ENCODE measurements at regions of chr16 and their contacts with region 1.

Region 1: DNA sequence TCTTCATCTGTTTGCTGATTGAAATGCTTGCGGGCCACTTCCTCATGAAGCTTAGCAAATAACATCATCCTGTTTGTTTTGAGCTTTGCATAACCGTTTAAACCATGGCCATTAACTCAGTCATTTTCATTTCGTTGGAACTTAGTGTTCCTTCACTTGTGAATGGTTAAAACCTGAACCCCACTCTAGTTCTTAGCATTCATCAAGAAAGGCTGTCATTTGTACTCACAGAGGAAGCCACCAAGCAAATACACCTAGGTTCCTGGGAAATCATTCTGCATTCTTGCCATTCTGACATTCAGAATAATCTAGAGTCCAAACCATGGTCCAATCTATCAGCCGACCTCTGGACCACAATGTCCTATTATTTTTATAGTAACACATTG is 8.4 kb upstream of the TAT start:
- DNase-seq: no peak
- ATAC-seq: no peak
- H3K4me3 ChIP-seq: no peak overlapping the region
- H3K27ac ChIP-seq: no peak overlapping the region
- H3K4me1 ChIP-seq: no peaks in the 10 kb centered on the region
- H3K27me3 ChIP-seq: peaks cover 35 to 45% of the 10 kb centered on the region in 2 experiments
- CTCF ChIP-seq: no peak
- EP300 ChIP-seq: no peak
- POLR2A ChIP-seq: no peak
- RAD21 ChIP-seq: no peak

Region 2: GRCh38 chr16:71426072-71426879 is 159.0 kb before region 1 on chr16:
- CTCF ChIA-PET with region 1: no interaction called
- POLR2A ChIA-PET with region 1: no interaction called
- in situ Hi-C with region 1: loop called (anchors 10 kb)
- intact Hi-C with region 1: no loop called
- DNase-seq: peak; percentile 59 to 70 (median 68)
- ATAC-seq: peak; percentile 83
- H3K4me3 ChIP-seq: peak overlapping the region; percentile 11; the same call in 1 of the 2 replicates
- H3K27ac ChIP-seq: no peak overlapping the region
- H3K4me1 ChIP-seq: peaks cover 15 to 19% of the 10 kb centered on the region in 2 experiments; a peak in 4 of 5 replicates
- H3K27me3 ChIP-seq: peaks cover 15 to 53% of the 10 kb centered on the region in 2 experiments; a peak in 4 of 5 replicates
- CTCF ChIP-seq: no peak
- EP300 ChIP-seq: no peak
- POLR2A ChIP-seq: no peak
- RAD21 ChIP-seq: no peak

Region 3: GRCh38 chr16:71461686-71462648 is 123.3 kb before region 1 on chr16 and contains the start of gene ZNF23:
- CTCF ChIA-PET with region 1: no interaction called
- POLR2A ChIA-PET with region 1: no interaction called
- in situ Hi-C with region 1: no loop called
- intact Hi-C with region 1: no loop called
- DNase-seq: peak; percentile 87 to 96 (median 94)
- ATAC-seq: peak; percentile 99
- H3K4me3 ChIP-seq: peak within 1 kb of the TSS; percentile 85
- H3K27ac ChIP-seq: peak within 1 kb of the TSS; percentile 64
- H3K4me1 ChIP-seq: peaks cover 4 to 6% of the 10 kb centered on the region in 2 experiments; a peak in 1 of 5 replicates
- H3K27me3 ChIP-seq: no peaks in the 10 kb centered on the region; a peak in 1 of 5 replicates
- CTCF ChIP-seq: no peak
- EP300 ChIP-seq: 0 out of 2 replicates have a peak, but pooled peaks have one; percentile 21
- POLR2A ChIP-seq: peak; percentile 95
- RAD21 ChIP-seq: no peak; a peak in 1 of 4 replicates
- polyA plus RNA-seq, gene ZNF23: 4.7 to 7.2 TPM